ENCODE measurements at regions of chr1 and their contacts with region 1.

Region 1: DNA sequence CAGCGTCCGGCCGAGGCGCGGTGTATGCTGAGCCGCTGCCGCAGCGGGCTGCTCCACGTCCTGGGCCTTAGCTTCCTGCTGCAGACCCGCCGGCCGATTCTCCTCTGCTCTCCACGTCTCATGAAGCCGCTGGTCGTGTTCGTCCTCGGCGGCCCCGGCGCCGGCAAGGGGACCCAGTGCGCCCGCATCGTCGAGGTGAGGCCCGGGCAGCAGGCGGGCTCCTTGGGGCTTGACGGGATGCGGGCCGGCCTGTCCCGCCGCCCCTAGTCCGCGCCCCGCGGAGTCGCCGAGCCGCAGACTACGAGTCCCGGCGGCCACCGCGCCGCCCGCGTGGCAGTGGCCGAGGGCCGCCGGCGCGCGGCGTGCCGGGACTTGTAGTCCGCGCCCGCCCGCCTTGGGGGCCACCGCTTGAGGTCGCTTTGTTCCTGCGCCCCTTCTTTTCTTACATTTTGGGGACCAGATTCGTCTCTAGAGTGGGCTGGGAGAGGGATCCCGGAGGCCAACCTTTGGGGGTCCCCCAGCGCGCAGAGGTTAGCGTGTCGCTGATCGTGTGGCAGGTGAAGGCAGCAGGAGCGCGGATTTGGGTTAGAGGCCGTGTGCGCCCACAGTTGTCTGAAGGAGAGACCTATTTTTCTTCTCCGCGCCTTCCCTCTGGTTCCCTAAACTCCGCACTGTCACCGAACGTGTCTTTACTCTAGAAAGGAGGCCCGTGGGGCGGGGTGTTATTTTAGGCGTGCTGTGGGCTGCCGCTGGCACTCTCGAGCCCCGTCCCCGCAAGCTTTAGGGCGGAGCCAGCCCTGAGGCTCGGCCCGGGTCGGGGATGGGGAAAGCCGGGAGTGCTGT is 553 bp downstream of the CMPK1 start:
- DNase-seq: peak; percentile 60 to 88 (median 78)
- H3K4me3 ChIP-seq: peak overlapping the region; percentile 44 to 97 (median 85)
- H3K27ac ChIP-seq: peak overlapping the region; percentile 74 to 99 (median 96)
- H3K27me3 ChIP-seq: no peaks in the 10 kb centered on the region
- CTCF ChIP-seq: peak in 49 of 56 donors; percentile 16 to 73 (median 45)

Region 2: GRCh38 chr1:47313915-47314664 is 20.1 kb before region 1 on chr1 and contains the start of gene STIL:
- intact Hi-C with region 1: loop called (anchors 2 kb)
- DNase-seq: peak; percentile 98 to 100 (median 99)
- H3K4me3 ChIP-seq: peak within 1 kb of the TSS; percentile 43 to 94 (median 79)
- H3K27ac ChIP-seq: peak within 1 kb of the TSS in 54 of 59 donors; percentile 6 to 88 (median 68)
- H3K27me3 ChIP-seq: no peaks in the 10 kb centered on the region
- CTCF ChIP-seq: peak in 50 of 56 donors; percentile 12 to 65 (median 42)
- total RNA-seq, gene STIL: 2.2 to 7.9 (median 4.2) TPM

Region 3: GRCh38 chr1:47437447-47438164 is 103.5 kb after region 1 on chr1 and contains the start of gene FOXD2:
- intact Hi-C with region 1: loop called in 1 of 2 experiments (anchors 10 kb)
- DNase-seq: peak in 5 of 10 donors; percentile 11 to 73 (median 45)
- H3K4me3 ChIP-seq: peak within 1 kb of the TSS; percentile 20 to 71 (median 58)
- H3K27ac ChIP-seq: peak within 1 kb of the TSS in 29 of 59 donors; percentile 16 to 80 (median 49)
- H3K27me3 ChIP-seq: peaks cover 9 to 99% (median 93%) of the 10 kb centered on the region in 45 donors
- CTCF ChIP-seq: peak; percentile 55 to 98 (median 85)
- total RNA-seq, gene FOXD2: 0.09 to 2.0 (median 0.25) TPM in 79 of 120 experiments, not detected in the others